ENCODE measurements at regions of chr5 and their contacts with region 1.

Region 1: DNA sequence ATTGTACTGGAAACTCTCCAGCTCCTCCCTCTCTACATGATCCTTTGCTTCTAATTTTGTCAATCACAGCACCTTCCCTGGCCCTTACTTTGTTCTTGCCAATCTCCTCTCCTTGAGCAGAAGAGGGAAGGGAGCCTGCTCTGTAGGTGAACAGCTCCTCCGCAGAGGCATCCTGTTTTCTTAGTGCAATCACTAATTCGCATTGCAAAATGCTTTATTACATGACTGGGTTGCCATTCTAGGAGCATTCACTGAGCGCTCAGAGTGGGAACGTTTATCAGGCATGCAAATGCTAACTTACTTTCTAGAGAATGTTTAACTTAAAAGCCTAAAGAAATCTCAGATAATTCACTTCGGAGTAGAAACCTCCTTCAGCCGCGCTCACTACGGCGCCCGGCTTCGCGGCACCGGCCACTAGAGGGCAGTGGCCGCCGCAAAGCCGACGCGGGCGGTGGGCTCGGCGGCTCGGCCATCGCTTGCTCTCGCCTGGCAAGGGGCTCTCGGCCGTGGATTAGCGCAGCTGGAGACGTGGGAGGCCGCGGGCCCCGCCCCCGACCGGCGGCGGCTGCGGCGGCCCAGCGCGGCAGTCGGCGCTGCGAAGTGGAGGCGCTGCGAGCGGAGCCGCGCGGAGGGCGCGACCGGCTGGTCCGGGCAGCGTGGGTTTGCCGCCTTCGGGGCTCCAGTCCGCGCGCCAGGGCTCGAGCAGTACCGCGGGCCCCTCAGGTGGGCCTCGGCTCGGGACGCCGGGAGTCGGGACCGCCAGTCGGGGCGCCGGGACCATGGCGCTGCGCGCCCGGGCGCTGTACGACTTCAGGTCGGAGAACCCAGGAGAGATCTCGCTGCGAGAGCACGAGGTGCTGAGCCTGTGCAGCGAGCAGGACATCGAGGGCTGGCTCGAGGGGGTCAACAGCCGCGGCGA is at the start of gene SNX18:
- DNase-seq: peak; percentile 96
- H3K4me3 ChIP-seq: peak within 1 kb of the TSS; percentile 77 to 93
- H3K27ac ChIP-seq: peak within 1 kb of the TSS in 1 of 2 experiments; percentile 83; a peak in 3 of 4 replicates
- H3K4me1 ChIP-seq: peaks cover 15 to 35% of the 10 kb centered on the region in 2 experiments; a peak in 3 of 4 replicates
- H3K27me3 ChIP-seq: no peaks in the 10 kb centered on the region
- CTCF ChIP-seq: peak; percentile 96
- EP300 ChIP-seq: peak; percentile 25 to 35; a peak in 1 of 4 replicates
- RAD21 ChIP-seq: peak; percentile 94
- polyA plus RNA-seq, gene SNX18: 4.3 and 4.6 TPM in 2 replicates

Region 2: GRCh38 chr5:53856506-53856905 is 660.9 kb before region 1 on chr5:
- CTCF ChIA-PET with region 1: no interaction called
- POLR2A ChIA-PET with region 1: no interaction called
- DNase-seq: no peak
- H3K4me3 ChIP-seq: no peak overlapping the region
- H3K27ac ChIP-seq: no peak overlapping the region
- H3K4me1 ChIP-seq: no peaks in the 10 kb centered on the region
- H3K27me3 ChIP-seq: no peaks in the 10 kb centered on the region
- CTCF ChIP-seq: no peak
- EP300 ChIP-seq: no peak
- RAD21 ChIP-seq: no peak

Region 3: GRCh38 chr5:54492178-54492577 is 25.3 kb before region 1 on chr5:
- CTCF ChIA-PET with region 1: interaction called, 23 read pairs
- POLR2A ChIA-PET with region 1: no interaction called
- DNase-seq: no peak
- H3K4me3 ChIP-seq: no peak overlapping the region
- H3K27ac ChIP-seq: no peak overlapping the region
- H3K4me1 ChIP-seq: no peaks in the 10 kb centered on the region
- H3K27me3 ChIP-seq: peaks cover 12% of the 10 kb centered on the region
- CTCF ChIP-seq: no peak
- EP300 ChIP-seq: no peak
- RAD21 ChIP-seq: no peak

Region 4: DNA sequence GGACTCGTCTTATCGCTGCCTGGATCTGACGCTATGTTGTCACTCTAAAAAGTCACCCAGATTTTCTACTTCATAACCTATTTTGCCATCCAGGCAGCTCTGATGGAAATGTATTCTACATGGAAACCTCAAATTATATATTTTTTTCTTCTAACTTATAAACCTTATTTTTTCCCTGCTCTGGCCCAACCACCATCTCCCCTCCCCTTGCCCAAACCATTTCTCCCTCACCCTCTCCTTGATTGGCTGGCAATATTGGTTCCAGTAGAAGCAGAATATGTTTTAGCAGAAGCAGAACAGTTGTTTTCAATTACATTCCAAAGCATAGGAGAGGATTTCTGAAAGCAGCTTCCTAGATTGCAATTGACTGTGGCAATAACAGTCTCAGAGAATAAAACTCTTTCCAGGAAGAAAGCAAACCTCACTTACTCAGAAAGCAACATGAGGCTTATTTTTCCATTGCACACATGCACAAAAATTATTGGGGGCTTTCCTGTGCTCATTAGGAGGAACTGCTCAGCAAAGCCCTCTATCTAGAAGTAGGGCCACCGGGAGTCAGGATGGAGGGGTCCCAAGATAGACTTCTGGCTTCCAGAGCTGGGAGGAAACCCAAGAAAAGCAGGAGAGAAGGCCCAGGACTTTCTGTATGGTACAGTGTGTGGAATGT is 276.2 kb after region 1 on chr5:
- CTCF ChIA-PET with region 1: interaction called, 16 read pairs
- POLR2A ChIA-PET with region 1: no interaction called
- DNase-seq: no peak
- H3K4me3 ChIP-seq: no peak overlapping the region
- H3K27ac ChIP-seq: no peak overlapping the region
- H3K4me1 ChIP-seq: no peaks in the 10 kb centered on the region
- H3K27me3 ChIP-seq: no peaks in the 10 kb centered on the region; the same call in 1 of the 2 replicates
- CTCF ChIP-seq: no peak
- EP300 ChIP-seq: no peak
- RAD21 ChIP-seq: no peak

Region 5: DNA sequence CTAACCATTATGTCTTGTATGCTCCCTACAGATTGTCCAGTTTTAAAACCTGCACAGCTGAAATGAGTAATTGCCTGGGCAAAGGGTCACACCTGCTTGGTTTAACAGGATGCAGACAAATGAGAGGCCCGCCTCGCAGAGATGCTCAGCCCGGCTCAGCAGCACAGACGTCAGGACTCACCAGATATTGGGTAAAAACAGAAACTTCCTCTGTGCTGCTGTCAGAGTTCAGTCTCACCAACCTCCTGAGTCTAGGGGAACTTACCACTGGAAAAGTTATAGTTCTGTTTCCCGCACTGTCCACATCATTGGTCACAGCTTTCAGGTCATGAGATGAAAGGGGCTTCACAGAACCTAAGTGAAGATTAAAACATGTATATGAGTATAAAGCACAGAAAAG is 315.4 kb after region 1 on chr5:
- CTCF ChIA-PET with region 1: interaction called, 15 read pairs
- POLR2A ChIA-PET with region 1: no interaction called
- DNase-seq: no peak
- H3K4me3 ChIP-seq: no peak overlapping the region
- H3K27ac ChIP-seq: no peak overlapping the region
- H3K4me1 ChIP-seq: no peaks in the 10 kb centered on the region; a peak in 1 of 4 replicates
- H3K27me3 ChIP-seq: peaks cover 5% of the 10 kb centered on the region; the same call in 1 of the 2 replicates
- CTCF ChIP-seq: no peak
- EP300 ChIP-seq: no peak
- RAD21 ChIP-seq: no peak

Region 6: DNA sequence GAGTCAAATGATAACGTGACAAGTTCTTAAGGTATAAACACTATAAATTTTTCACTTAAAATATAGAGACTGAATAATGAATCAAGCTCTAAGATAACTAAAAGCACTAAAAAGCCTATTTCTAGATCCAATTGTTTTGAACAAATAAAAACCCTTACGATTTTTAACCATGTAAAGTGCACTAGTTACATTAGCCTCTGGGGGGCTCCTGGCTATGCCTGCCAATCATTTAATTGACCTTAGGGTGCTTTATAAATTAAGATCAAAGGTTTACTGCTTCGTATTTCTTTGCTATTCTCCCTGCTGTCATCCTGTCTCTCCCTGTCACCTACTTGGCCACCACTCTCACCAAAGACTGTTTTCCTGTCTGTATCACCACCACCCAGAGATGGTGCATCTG is 334.6 kb after region 1 on chr5:
- CTCF ChIA-PET with region 1: interaction called, 43 read pairs
- POLR2A ChIA-PET with region 1: no interaction called
- DNase-seq: no peak
- H3K4me3 ChIP-seq: no peak overlapping the region
- H3K27ac ChIP-seq: no peak overlapping the region
- H3K4me1 ChIP-seq: no peaks in the 10 kb centered on the region
- H3K27me3 ChIP-seq: peaks cover 14% of the 10 kb centered on the region; the same call in 1 of the 2 replicates
- CTCF ChIP-seq: peak; percentile 29; the same call in 1 of the 2 replicates
- EP300 ChIP-seq: no peak
- RAD21 ChIP-seq: no peak

Region 7: DNA sequence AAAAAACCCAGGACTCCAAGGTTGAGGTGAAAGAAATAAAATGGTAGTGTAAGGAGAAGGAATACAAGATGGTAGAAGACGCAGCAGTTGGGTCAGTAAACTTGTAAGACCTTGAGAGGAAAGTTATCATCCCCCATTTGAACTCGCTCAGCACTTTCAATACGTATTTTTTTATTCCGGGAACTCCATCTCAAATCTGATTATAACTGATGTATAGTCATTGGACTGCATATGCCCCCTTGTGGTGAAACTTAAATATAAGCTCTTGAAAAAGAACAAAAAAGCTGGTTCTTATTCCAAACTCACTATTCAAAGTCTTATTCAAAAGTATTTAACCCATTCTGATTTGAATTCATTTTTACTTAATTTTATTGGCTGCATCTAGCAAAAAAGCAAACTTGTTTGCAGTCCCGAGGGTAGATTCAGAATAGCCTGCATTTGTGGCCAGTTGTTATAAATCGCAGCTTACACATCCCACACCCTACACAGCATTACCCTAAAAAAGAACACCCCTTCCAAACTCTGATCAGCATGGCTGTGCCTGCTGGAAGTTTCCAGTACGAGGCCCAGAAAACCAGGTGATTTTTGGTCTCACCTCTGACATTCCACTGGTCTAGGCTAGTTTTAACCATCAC is 350.0 kb after region 1 on chr5:
- CTCF ChIA-PET with region 1: interaction called, 92 read pairs
- POLR2A ChIA-PET with region 1: interaction called, 4 read pairs
- DNase-seq: peak; percentile 61
- H3K4me3 ChIP-seq: peak overlapping the region; percentile 10 to 44; a peak in 1 of 4 replicates
- H3K27ac ChIP-seq: no peak overlapping the region
- H3K4me1 ChIP-seq: no peaks in the 10 kb centered on the region; a peak in 1 of 4 replicates
- H3K27me3 ChIP-seq: peaks cover 43% of the 10 kb centered on the region; the same call in 1 of the 2 replicates
- CTCF ChIP-seq: peak; percentile 84
- EP300 ChIP-seq: no peak
- RAD21 ChIP-seq: peak; percentile 66

Measured in SK-N-SH (cell line).